ENCODE measurements at regions of chr3 and their contacts with region 1.

Region 1: GRCh38 chr3:185659942-185660921 is 74.1 kb downstream of the SENP2 start:
- DNase-seq: peak; percentile 93
- ATAC-seq: peak; percentile 34
- H3K4me3 ChIP-seq: no peak overlapping the region
- H3K27ac ChIP-seq: peak overlapping the region; percentile 64
- H3K4me1 ChIP-seq: peaks cover 55% of the 10 kb centered on the region
- H3K27me3 ChIP-seq: no peaks in the 10 kb centered on the region
- CTCF ChIP-seq: peak; percentile 99

Region 2: DNA sequence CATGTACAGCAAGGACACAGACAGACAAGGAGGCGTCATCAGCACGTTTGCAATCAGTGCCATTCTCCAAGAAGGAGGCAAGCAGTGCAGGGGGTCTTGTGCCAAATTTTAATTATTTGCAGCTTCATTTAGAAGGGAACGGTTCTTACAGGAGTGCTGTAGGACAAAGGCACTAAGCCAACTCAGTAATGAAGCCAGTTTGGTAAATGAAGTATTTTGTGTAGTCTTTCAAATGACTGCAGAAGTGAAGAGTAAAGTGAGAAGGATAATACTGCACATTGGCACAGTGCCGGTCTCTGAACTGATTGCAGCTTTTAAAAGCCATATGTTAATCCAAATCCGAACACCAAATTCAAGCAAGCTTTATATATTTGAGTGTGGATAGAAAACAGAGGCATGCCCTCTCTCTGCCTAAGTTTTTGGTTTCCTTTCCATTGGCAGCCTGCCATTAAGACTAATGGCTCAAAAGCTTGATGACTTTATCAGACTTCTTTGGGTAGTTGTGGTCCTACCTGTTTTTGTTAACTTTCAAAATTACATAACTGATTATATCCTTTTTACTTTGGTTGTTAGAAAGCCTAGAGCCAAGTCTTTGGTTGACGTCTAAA is 27.1 kb after region 1 on chr3:
- CTCF ChIA-PET with region 1: no interaction called
- POLR2A ChIA-PET with region 1: no interaction called
- intact Hi-C with region 1: loop called (anchors 2 kb)
- DNase-seq: peak; percentile 72
- ATAC-seq: no peak
- H3K4me3 ChIP-seq: no peak overlapping the region
- H3K27ac ChIP-seq: peak overlapping the region; percentile 96
- H3K4me1 ChIP-seq: peaks cover 54% of the 10 kb centered on the region
- H3K27me3 ChIP-seq: no peaks in the 10 kb centered on the region
- CTCF ChIP-seq: no peak

Region 3: DNA sequence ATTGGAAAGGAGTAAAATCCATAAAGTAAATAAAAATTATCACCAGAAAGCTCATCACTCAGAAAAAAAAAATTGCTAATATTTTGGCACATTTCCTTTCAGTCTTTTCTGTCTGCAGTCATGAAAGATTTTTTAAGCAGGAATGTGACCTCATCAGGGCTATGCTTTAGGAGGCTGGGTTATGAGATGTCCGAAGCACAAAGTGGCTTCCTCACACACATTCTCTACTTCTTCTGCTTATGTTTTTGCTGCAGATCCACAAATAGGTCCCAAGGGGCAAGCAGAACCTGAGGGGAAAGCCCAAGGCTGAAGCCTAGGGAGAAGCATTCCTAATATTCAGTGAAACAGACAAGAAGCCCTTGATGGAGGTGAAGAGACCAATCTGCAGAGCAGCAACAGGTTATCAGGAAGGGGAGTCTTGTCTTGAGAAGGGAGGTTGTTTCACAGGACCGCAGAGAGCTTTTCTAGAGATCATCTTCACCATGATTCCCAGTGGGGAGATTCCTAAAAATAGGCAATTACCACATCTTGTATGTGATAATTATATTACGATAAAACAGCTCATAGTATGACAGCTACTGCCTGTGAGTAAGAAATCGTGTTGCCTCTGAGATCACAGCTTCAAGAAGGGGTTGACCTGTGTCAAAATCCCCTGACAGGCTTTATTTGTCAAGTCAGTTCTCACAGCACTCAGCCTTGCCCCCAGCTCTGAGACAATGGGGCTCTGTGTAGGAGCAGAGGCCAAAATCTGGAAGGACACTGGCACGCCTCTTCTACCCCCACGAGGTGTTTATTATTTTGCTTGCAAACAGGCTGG is 104.1 kb after region 1 on chr3:
- CTCF ChIA-PET with region 1: interaction called, 14 read pairs
- POLR2A ChIA-PET with region 1: no interaction called
- intact Hi-C with region 1: loop called (anchors 2 kb)
- DNase-seq: no peak
- ATAC-seq: no peak
- H3K4me3 ChIP-seq: no peak overlapping the region
- H3K27ac ChIP-seq: no peak overlapping the region
- H3K4me1 ChIP-seq: peaks cover 43% of the 10 kb centered on the region
- H3K27me3 ChIP-seq: no peaks in the 10 kb centered on the region
- CTCF ChIP-seq: no peak

Region 4: GRCh38 chr3:185824476-185825378 is 164.5 kb after region 1 on chr3 and contains the start of gene IGF2BP2:
- CTCF ChIA-PET with region 1: interaction called, 6 read pairs
- POLR2A ChIA-PET with region 1: no interaction called
- intact Hi-C with region 1: loop called (anchors 5 kb)
- DNase-seq: peak; percentile 81
- ATAC-seq: peak; percentile 68
- H3K4me3 ChIP-seq: peak within 1 kb of the TSS; percentile 85
- H3K27ac ChIP-seq: peak within 1 kb of the TSS; percentile 83
- H3K4me1 ChIP-seq: peaks cover 29% of the 10 kb centered on the region
- H3K27me3 ChIP-seq: no peaks in the 10 kb centered on the region
- CTCF ChIP-seq: no peak
- total RNA-seq, gene IGF2BP2: 81.2 and 105 TPM in 2 replicates

Region 5: GRCh38 chr3:185912929-185913901 is 253.0 kb after region 1 on chr3:
- CTCF ChIA-PET with region 1: interaction called, 9 read pairs
- POLR2A ChIA-PET with region 1: no interaction called
- intact Hi-C with region 1: loop called (anchors 5 kb)
- DNase-seq: peak; percentile 18
- ATAC-seq: no peak
- H3K4me3 ChIP-seq: no peak overlapping the region
- H3K27ac ChIP-seq: no peak overlapping the region
- H3K4me1 ChIP-seq: no peaks in the 10 kb centered on the region
- H3K27me3 ChIP-seq: no peaks in the 10 kb centered on the region
- CTCF ChIP-seq: no peak

Region 6: DNA sequence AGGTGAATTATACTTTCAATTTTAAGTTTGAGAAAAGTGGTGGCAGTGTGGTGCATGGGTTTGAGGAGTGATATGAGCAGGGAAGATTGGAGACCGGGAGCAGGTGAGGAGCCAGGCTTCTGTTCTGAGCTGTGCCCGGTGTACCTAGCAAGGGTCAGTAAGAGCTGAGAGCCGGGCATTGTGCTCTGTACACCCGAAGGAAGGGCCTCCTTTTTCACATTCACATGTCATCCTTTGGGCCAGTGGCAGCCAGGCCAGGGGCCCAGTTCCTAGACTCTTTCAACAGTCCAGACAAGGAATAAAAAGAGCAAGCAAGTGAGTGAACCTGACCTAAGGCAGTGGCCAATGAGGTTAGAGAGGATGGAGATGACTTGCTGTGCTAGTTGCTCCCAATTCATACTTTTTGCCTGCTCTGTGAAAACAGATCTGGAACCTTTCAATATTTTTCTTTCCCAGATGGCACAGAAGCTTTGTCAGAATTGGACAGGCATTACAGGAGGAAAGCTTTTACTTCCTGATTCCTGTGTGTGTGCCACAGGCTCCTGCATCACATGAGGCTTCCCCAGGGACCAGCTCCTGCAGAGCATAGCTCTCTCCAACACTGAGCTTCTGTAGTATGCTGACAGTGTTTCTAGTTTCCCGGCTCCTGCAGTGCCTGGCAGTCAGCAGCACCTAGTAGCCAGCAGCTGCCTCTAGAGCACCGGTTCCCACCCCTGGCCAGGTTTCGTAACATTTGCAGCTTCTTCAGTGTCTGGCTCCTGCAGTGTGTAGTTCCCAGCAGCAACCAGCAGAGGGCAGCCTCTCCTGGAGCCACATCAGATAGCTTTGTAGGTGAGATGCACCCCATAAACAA is 282.9 kb after region 1 on chr3:
- CTCF ChIA-PET with region 1: interaction called, 13 read pairs
- POLR2A ChIA-PET with region 1: no interaction called
- intact Hi-C with region 1: no loop called
- DNase-seq: peak; percentile 87
- ATAC-seq: peak; percentile 71
- H3K4me3 ChIP-seq: no peak overlapping the region
- H3K27ac ChIP-seq: no peak overlapping the region
- H3K4me1 ChIP-seq: peaks cover 36% of the 10 kb centered on the region
- H3K27me3 ChIP-seq: no peaks in the 10 kb centered on the region
- CTCF ChIP-seq: peak; percentile 99